Activated CD4-positive, alpha-beta T cell treated with anti-CD3 and anti-CD28 coated beads for 36 hours (primary cell): ENCODE measurements at regions of chr18 and their contacts with region 1.

Region 1: DNA sequence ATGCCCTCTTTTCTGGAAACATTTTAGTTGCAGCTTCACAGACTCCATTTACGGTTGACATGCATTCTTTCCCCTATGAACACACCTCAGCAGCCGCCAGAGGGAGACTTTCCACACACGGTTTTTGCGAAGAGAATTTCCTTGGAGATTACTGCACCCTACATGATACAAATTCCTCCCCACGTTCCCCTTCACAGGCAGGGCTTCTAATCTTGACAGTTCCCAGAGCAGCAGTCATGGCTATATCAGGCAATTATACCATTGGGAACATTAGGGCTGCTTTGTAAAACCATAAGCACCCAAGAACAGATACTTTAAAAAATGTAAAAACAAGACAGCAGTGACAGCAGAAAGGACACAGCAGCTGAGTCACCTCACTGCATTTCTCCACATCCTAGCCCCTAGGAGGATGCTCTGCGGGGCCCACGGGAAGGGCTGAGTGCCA is 253.8 kb downstream of the TGIF1 start:
- DNase-seq: peak; percentile 63
- ATAC-seq: no peak
- H3K4me3 Mint-ChIP-seq: no peak overlapping the region
- H3K27ac Mint-ChIP-seq: no peak overlapping the region
- H3K4me1 Mint-ChIP-seq: peaks cover 4% of the 10 kb centered on the region
- H3K27me3 Mint-ChIP-seq: peaks cover 32% of the 10 kb centered on the region

Region 2: DNA sequence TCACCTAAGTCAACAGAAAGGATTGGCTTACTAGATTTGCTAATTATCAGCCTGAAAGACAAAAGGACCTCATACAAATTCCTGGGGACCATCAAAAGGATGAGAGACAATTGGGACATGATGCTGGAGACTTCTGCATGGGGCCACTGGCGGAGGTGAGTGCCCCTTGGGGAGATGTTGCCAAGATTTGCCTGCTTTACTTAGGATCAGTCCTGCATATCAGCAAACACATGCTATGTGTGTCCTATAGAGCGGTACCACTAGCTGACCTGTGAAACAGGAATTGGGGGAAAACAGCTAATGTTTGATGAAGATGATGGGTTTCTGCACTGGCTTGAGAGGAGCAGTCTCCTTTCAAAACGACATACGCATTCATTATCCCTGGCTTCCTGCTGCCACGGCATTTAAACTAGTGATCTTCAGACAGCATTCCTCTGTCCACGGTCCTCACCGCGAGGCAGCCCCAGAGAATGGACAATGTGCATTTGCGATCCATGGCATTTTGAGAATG is 149.6 kb before region 1 on chr18:
- CTCF ChIA-PET with region 1: no interaction called
- POLR2A ChIA-PET with region 1: no interaction called
- intact Hi-C with region 1: no loop called
- DNase-seq: no peak
- ATAC-seq: no peak
- H3K4me3 Mint-ChIP-seq: no peak overlapping the region
- H3K27ac Mint-ChIP-seq: no peak overlapping the region
- H3K4me1 Mint-ChIP-seq: no peaks in the 10 kb centered on the region
- H3K27me3 Mint-ChIP-seq: no peaks in the 10 kb centered on the region

Region 3: GRCh38 chr18:3688699-3689098 is 15.1 kb before region 1 on chr18:
- CTCF ChIA-PET with region 1: interaction called, 3 read pairs
- POLR2A ChIA-PET with region 1: no interaction called
- intact Hi-C with region 1: loop called in 1 of 2 experiments (anchors 2 kb)
- DNase-seq: no peak
- ATAC-seq: no peak
- H3K4me3 Mint-ChIP-seq: no peak overlapping the region
- H3K27ac Mint-ChIP-seq: no peak overlapping the region
- H3K4me1 Mint-ChIP-seq: peaks cover 6% of the 10 kb centered on the region
- H3K27me3 Mint-ChIP-seq: no peaks in the 10 kb centered on the region

Region 4: DNA sequence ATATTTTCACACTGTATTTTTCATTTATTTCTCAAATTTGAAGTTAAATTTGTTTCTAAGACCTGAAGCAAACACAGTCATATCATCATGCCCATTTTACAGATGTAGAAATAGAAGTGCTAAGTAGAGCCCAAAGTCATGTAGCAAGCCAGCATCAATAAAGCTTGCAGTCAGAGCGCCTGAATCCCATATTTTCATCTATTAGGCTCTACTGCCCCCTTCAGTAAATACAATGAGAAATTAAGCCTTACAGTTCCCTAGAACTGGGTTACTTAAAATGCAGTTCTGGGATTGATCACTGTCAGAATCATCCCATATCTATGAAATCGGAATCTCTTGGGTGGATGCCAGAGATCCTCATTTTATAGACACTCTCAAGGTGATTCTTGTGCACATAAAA is 166.1 kb after region 1 on chr18:
- CTCF ChIA-PET with region 1: interaction called, 5 read pairs
- POLR2A ChIA-PET with region 1: no interaction called
- intact Hi-C with region 1: loop called in 1 of 2 experiments (anchors 1 kb)
- DNase-seq: no peak
- ATAC-seq: no peak
- H3K4me3 Mint-ChIP-seq: no peak overlapping the region
- H3K27ac Mint-ChIP-seq: no peak overlapping the region
- H3K4me1 Mint-ChIP-seq: no peaks in the 10 kb centered on the region
- H3K27me3 Mint-ChIP-seq: peaks cover 11% of the 10 kb centered on the region